GM10248 (cell line): ENCODE measurements at regions of chr22 and their contacts with region 1.

Region 1: DNA sequence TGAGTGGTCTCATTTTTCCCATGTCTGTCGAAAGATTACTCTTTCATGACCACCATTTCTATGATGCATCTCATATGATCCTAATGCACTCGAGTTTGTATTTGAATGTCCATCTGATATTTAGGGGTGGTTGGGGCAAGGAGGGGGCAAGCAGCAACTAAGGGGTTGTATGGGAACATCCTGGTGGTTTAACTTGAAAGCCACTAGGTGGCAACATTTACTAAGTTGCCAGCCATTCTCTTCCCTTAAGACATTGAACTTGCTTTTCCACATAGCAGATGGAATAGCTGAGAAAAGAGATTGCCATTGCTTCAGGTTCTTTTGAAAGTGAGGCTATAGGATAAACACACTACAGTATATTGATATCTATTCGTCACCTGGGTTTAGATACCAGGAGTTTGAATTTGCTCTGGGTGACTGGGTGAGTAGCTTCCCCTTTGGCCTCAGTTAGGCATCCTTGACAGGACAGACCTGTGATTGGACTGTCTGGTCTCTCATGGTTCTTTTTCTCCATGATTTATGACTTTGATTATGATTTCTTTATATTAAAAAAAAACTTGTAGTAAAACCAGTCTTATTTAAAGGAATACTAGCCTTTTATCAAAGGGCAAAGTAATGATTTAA is 32.4 kb downstream of the NF2 start:
- DNase-seq: peak; percentile 39
- CTCF ChIP-seq: peak; percentile 58

Region 2: GRCh38 chr22:29553351-29554224 is 82.3 kb before region 1 on chr22 and contains the start of gene THOC5:
- CTCF ChIA-PET with region 1: no interaction called
- POLR2A ChIA-PET with region 1: no interaction called
- DNase-seq: peak; percentile 96
- CTCF ChIP-seq: peak; percentile 82

Region 3: DNA sequence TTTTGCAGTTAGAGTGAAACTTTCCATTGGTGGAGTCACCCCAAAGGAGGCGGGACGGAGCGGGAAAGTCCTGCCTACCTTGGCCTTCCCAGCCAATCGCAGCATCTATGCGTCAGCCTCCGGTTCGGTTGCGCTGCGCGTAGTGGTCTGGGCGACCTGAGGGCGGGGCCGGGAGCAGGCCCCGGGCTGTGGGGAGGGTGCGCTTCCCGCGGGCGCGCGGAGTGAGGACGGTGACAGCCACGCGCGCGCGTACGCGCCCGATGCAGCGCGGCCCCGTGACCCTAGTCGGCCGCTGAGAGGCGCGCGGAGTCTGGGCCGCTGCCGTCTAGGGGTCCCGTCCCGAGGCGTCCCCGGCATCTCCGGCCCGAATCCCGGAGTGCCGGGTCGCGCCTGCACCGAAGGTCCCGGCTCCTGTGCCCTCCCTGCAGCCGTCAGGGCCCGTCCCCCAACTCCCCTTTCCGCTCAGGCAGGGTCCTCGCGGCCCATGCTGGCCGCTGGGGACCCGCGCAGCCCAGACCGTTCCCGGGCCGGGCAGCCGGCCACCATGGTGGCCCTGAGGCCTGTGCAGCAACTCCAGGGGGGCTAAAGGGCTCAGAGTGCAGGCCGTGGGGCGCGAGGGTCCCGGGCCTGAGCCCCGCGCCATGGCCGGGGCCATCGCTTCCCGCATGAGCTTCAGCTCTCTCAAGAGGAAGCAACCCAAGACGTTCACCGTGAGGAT is 32.3 kb before region 1 on chr22 and contains the start of gene NF2:
- CTCF ChIA-PET with region 1: interaction called, 10 read pairs
- POLR2A ChIA-PET with region 1: no interaction called
- DNase-seq: peak; percentile 99
- CTCF ChIP-seq: peak; percentile 25

Region 4: GRCh38 chr22:29625090-29625825 is 10.6 kb before region 1 on chr22:
- CTCF ChIA-PET with region 1: interaction called, 59 read pairs
- POLR2A ChIA-PET with region 1: no interaction called
- DNase-seq: peak; percentile 40
- CTCF ChIP-seq: peak; percentile 81

Region 5: GRCh38 chr22:30079952-30080533 is 444.2 kb after region 1 on chr22 and contains the start of gene HORMAD2:
- CTCF ChIA-PET with region 1: interaction called, 14 read pairs
- POLR2A ChIA-PET with region 1: no interaction called
- DNase-seq: peak; percentile 31
- CTCF ChIP-seq: no peak

Region 6: GRCh38 chr22:30089655-30089974 is 453.8 kb after region 1 on chr22:
- CTCF ChIA-PET with region 1: interaction called, 14 read pairs
- POLR2A ChIA-PET with region 1: no interaction called
- DNase-seq: no peak
- CTCF ChIP-seq: no peak